Right ventricle myocardium inferior (tissue), 1 donor: ENCODE measurements at regions of chr6 and their contacts with region 1.

Region 1: GRCh38 chr6:52829046-52829817 is 11.4 kb downstream of the GSTA5 start:
- DNase-seq: no peak
- ATAC-seq: no peak

Region 2: GRCh38 chr6:52686878-52687699 is 142.1 kb before region 1 on chr6:
- intact Hi-C with region 1: no loop called
- DNase-seq: no peak
- ATAC-seq: no peak

Region 3: GRCh38 chr6:52788478-52788877 is 40.8 kb before region 1 on chr6:
- intact Hi-C with region 1: loop called (anchors 5 kb)
- DNase-seq: no peak
- ATAC-seq: no peak

Region 4: GRCh38 chr6:54390362-54390761 is 1561.1 kb after region 1 on chr6:
- intact Hi-C with region 1: no loop called
- DNase-seq: no peak
- ATAC-seq: no peak